ENCODE measurements at regions of chr4 and their contacts with region 1.

Region 1: GRCh38 chr4:145487631-145488030 is 6.0 kb downstream of the SMAD1 start:
- DNase-seq: peak; percentile 55
- H3K4me3 Mint-ChIP-seq: no peak overlapping the region
- H3K27ac Mint-ChIP-seq: no peak overlapping the region
- H3K4me1 Mint-ChIP-seq: peaks cover 5% of the 10 kb centered on the region
- H3K27me3 Mint-ChIP-seq: peaks cover 14% of the 10 kb centered on the region

Region 2: GRCh38 chr4:145299380-145300076 is 188.1 kb before region 1 on chr4:
- CTCF ChIA-PET with region 1: no interaction called
- intact Hi-C with region 1: loop called (anchors 2 kb)
- DNase-seq: peak; percentile 88
- H3K4me3 Mint-ChIP-seq: no peak overlapping the region
- H3K27ac Mint-ChIP-seq: no peak overlapping the region
- H3K4me1 Mint-ChIP-seq: peaks cover 23% of the 10 kb centered on the region
- H3K27me3 Mint-ChIP-seq: peaks cover 9% of the 10 kb centered on the region

Region 3: DNA sequence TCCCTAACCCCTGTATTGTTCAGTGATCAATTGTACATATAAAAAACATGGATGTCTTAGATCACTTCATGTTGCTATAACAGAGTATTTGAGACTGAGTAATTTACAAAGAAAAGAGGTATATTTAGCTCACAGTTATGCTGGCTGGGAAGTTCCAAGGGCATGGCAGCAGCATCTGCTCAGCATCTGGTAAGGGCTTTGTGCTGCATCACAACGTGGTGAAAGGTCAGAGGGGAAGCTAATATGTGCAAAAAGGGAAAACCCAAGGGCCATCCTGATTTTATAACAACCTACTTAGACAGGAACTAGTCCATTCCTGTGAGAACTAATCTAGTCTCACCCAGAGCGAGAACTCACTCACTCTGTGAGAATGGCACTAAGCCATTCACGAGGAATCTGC is 179.0 kb before region 1 on chr4:
- CTCF ChIA-PET with region 1: no interaction called
- intact Hi-C with region 1: loop called (anchors 1 kb)
- DNase-seq: peak; percentile 26
- H3K4me3 Mint-ChIP-seq: no peak overlapping the region
- H3K27ac Mint-ChIP-seq: peak overlapping the region; percentile 72
- H3K4me1 Mint-ChIP-seq: peaks cover 34% of the 10 kb centered on the region
- H3K27me3 Mint-ChIP-seq: peaks cover 4% of the 10 kb centered on the region

Region 4: DNA sequence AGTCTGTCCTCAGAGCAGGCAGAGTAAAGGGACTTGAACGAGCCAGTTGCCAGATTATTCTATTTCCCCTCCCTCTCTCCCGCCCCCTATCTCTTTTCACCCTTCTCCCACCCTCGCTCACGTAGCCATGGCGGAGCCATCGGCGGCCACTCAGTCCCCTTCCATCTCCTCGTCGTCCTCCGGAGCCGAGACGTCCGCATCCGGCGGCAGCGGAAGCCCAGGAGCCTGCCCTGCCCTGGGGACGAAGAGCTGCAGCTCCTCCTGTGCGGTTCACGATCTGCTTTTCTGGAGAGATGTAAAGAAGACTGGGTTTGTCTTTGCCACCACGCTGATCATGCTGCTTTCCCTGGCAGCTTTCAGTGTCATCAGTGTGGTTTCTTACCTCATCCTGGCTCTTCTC is 112.2 kb before region 1 on chr4:
- CTCF ChIA-PET with region 1: no interaction called
- intact Hi-C with region 1: no loop called
- DNase-seq: no peak
- H3K4me3 Mint-ChIP-seq: no peak overlapping the region
- H3K27ac Mint-ChIP-seq: no peak overlapping the region
- H3K4me1 Mint-ChIP-seq: no peaks in the 10 kb centered on the region
- H3K27me3 Mint-ChIP-seq: peaks cover 10% of the 10 kb centered on the region

Region 5: DNA sequence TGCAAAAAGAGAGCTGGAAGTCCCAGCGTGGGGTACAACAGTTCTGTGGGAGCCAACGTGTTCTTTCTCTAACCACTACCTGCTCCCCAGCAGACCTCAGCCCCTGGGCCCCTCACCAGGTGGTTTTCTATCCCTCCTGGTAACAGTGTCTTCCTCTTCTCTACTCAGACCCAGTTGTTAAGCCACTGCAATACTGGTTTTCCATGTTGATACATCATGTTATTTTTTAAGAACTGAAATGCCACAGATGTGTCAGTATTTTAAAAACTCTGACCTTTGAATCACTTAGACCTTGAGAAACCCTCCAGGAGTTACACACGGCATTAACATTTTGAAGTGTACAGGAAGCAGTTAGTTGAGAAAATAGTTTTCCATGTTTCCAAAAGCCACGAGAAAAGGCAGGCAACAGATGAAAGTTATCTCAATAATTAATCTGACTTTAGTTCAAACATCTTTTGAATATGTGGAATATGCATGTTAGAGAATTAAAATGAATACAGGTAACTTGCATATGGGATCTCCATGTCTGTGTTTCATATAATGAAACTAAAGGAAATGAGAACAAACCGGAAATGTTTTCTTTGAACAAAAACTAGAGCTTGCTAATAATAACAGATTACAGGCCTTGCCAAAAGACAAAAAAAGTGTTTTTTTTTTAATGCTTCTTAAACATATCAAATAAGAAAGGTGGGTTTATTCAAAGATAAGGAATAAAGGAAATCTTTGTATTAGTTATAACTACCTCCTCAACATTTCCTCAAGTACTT is 342.2 kb after region 1 on chr4:
- CTCF ChIA-PET with region 1: no interaction called
- intact Hi-C with region 1: loop called (anchors 5 kb)
- DNase-seq: peak; percentile 33
- H3K4me3 Mint-ChIP-seq: peak overlapping the region; percentile 23
- H3K27ac Mint-ChIP-seq: peak overlapping the region; percentile 13
- H3K4me1 Mint-ChIP-seq: peaks cover 41% of the 10 kb centered on the region
- H3K27me3 Mint-ChIP-seq: no peaks in the 10 kb centered on the region

Region 6: DNA sequence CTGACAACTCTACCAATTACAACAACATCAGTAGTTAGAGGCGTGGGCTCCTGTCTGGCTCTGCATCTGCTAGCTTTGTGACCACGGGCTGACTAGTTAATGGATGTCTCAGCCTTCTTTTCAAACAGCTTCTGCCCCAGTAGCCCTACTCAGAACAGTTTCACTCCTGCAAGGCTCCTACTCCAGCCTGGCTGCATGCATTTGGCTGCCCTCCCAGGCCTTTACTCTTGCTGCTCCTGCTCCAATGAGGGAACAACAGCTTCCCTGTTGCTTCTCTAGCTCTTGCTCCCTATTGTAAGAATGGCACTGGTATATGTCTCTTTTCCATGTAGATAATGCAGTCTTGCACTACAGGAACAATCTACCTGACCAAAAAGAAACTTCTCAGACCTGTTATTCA is 1364.7 kb after region 1 on chr4:
- CTCF ChIA-PET with region 1: no interaction called
- intact Hi-C with region 1: no loop called
- DNase-seq: no peak
- H3K4me3 Mint-ChIP-seq: no peak overlapping the region
- H3K27ac Mint-ChIP-seq: no peak overlapping the region
- H3K4me1 Mint-ChIP-seq: no peaks in the 10 kb centered on the region
- H3K27me3 Mint-ChIP-seq: peaks cover 7% of the 10 kb centered on the region